ENCODE measurements at regions of chr17 and their contacts with region 1.

Region 1: DNA sequence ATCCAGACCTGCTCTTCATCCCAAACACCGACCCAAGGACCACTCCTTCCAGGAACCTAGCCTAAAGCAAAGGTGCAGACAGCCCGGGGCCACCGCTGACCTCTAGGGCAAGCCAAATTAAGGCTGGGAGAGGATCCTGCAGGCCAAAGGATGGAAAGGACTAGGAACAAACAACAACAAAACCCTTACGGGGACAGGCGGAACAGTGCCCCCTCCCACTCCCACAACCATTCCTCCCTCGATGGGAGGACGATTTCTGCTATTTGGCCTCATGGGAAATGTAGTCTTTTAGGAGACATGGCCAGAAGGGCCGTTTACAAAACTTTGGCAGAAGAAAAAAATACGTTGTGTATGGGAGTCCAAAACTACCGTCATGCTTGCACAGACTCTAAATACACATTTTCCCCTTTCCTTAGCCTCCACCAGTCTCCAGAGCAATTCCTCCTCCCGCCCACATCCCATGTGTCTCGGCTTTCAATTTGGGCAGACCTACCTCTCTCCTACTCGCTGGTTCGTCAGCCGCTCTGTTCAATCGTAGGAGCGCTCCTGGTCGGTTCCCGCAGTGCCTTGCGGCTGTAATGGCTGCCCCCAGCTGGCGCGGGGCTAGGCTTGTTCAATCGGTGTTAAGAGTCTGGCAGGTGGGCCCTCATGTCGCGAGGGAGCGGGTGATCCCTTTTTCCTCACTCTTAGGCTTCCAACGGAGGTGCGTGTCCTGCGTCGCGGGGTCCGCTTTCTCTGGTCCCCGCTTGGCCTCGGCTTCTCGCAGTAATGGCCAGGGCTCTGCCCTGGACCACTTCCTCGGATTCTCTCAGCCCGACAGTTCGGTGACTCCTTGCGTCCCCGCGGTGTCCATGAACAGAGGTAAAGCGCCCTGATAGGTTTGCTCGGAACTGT is at the start of gene ERAL1:
- DNase-seq: peak; percentile 83
- H3K4me3 ChIP-seq: peak within 1 kb of the TSS; percentile 37 to 84 (median 49)
- H3K27ac ChIP-seq: peak within 1 kb of the TSS in 2 of 3 donors; percentile 36 to 74
- H3K4me1 ChIP-seq: peaks cover 3 to 9% of the 10 kb centered on the region in 2 donors
- H3K27me3 ChIP-seq: no peaks in the 10 kb centered on the region
- CTCF ChIP-seq: no peak
- POLR2A ChIP-seq: peak; percentile 11 to 60
- total RNA-seq, gene ERAL1: 23.1 to 59.3 (median 41.2) TPM

Region 2: DNA sequence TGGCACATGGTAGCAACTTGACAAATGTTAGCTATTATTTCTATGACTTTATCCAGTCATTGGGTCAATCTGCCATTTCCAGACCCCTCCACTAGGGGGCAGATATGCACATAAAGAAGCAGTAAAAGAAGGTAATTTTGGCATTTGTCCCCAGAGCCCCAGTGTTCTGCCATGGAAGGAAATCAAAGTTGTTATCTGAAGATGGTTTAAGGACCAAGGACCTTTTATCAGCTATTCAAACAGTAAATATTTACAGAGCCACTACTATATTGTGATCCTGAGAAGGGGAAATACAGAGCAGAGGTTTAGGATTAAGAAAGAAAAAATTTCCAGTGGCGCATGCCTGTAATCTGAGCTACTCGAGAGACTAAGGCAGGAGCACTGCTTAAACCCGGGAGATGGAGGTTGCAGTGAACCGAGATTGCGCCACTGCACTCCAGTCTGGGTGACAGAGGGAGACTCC is 90.9 kb before region 1 on chr17:
- intact Hi-C with region 1: loop called (anchors 10 kb)
- DNase-seq: peak; percentile 82 to 86
- H3K4me3 ChIP-seq: no peak overlapping the region
- H3K27ac ChIP-seq: no peak overlapping the region
- H3K4me1 ChIP-seq: peaks cover 3 to 11% of the 10 kb centered on the region in 2 donors
- H3K27me3 ChIP-seq: no peaks in the 10 kb centered on the region
- CTCF ChIP-seq: peak; percentile 76 to 90 (median 85)
- POLR2A ChIP-seq: no peak

Region 3: GRCh38 chr17:28818819-28819221 is 35.9 kb before region 1 on chr17:
- intact Hi-C with region 1: loop called (anchors 5 kb)
- DNase-seq: no peak
- H3K4me3 ChIP-seq: no peak overlapping the region
- H3K27ac ChIP-seq: no peak overlapping the region
- H3K4me1 ChIP-seq: peaks cover 0 to 3% of the 10 kb centered on the region in 2 donors
- H3K27me3 ChIP-seq: no peaks in the 10 kb centered on the region
- CTCF ChIP-seq: no peak
- POLR2A ChIP-seq: no peak